ENCODE measurements at regions of chr16 and their contacts with region 1.

Region 1: DNA sequence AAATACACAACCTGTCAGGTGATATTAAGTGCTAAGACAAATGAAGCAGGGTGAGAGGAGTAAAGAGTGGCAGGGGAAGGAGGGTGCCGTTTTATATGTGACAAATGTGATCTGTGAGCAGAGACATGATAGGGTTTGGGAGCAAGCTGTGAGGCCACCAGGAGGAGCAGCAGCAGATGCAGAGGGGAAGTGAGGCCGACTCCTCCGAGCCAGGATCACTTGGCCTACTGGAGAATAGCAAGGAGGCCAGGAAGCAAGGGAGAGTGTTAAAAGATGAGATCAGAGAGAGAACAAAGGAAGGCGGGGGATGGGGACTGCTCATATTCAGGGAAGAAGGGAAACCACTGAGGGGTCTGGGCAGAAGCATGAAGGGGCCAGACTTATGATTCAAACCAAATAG is 129.4 kb downstream of the TANGO6 start:
- DNase-seq: peak in 1 of 2 donors; percentile 12
- H3K4me3 ChIP-seq: no peak overlapping the region
- H3K27ac ChIP-seq: no peak overlapping the region
- H3K4me1 ChIP-seq: peaks cover 0 to 5% of the 10 kb centered on the region in 2 donors
- H3K27me3 ChIP-seq: no peaks in the 10 kb centered on the region
- CTCF ChIP-seq: no peak
- POLR2A ChIP-seq: no peak

Region 2: GRCh38 chr16:68756250-68756915 is 216.3 kb before region 1 on chr16:
- intact Hi-C with region 1: no loop called
- DNase-seq: peak; percentile 81 to 84
- H3K4me3 ChIP-seq: no peak overlapping the region
- H3K27ac ChIP-seq: peak overlapping the region; percentile 76 to 97 (median 88)
- H3K4me1 ChIP-seq: peaks cover 45 to 73% of the 10 kb centered on the region in 2 donors
- H3K27me3 ChIP-seq: no peaks in the 10 kb centered on the region
- CTCF ChIP-seq: no peak
- POLR2A ChIP-seq: no peak

Region 3: GRCh38 chr16:68921654-68922053 is 51.1 kb before region 1 on chr16:
- intact Hi-C with region 1: loop called (anchors 10 kb)
- DNase-seq: no peak
- H3K4me3 ChIP-seq: no peak overlapping the region
- H3K27ac ChIP-seq: no peak overlapping the region
- H3K4me1 ChIP-seq: no peaks in the 10 kb centered on the region
- H3K27me3 ChIP-seq: no peaks in the 10 kb centered on the region
- CTCF ChIP-seq: no peak
- POLR2A ChIP-seq: no peak